Endothelial cell of umbilical vein (primary cell): ENCODE measurements at regions of chr22 and their contacts with region 1.

Region 1: DNA sequence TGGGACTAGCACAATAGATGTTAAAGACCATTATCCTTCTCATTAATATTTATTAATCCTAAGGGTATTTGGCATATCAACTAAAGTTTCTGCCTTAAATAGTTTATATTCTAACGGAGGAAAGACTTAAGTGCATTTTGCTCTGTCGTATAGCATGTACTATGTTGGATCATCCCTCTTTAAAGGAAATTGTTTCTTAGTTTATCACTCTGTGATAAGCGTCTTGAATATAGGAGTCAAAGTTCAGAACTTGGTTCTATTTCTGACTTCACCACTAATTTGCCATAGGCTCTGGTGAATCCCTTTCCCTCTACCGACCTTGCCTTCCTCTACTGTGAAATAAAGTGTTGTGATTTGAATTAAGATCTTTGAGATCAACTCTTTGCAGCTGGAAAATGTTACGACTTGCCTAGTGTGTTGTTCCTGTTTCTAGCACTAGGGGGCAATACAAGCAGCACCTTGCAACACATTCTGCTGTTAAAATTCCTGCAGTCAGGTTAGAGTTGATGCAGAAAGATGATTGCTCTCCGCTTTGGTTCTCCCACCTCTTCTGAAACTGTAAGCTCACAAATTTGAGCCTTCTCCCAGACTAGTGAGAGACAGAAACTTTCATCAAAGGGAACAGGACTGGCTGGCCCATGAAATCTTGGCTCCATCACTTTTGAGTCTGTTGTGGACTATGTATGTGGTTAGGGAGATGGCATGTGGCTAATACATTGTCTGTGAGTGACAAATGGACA is 27.8 kb upstream of the ZNRF3 start:
- DNase-seq: peak; percentile 80
- H3K4me3 ChIP-seq: no peak overlapping the region
- H3K27ac ChIP-seq: no peak overlapping the region
- H3K4me1 ChIP-seq: no peaks in the 10 kb centered on the region
- H3K27me3 ChIP-seq: no peaks in the 10 kb centered on the region
- CTCF ChIP-seq: peak; percentile 74 to 79
- POLR2A ChIP-seq: no peak

Region 2: GRCh38 chr22:28894334-28894733 is 38.8 kb after region 1 on chr22:
- CTCF ChIA-PET with region 1: no interaction called
- POLR2A ChIA-PET with region 1: no interaction called
- dilution Hi-C with region 1: no loop called
- intact Hi-C with region 1: no loop called
- DNase-seq: no peak
- H3K4me3 ChIP-seq: no peak overlapping the region
- H3K27ac ChIP-seq: no peak overlapping the region
- H3K4me1 ChIP-seq: no peaks in the 10 kb centered on the region
- H3K27me3 ChIP-seq: no peaks in the 10 kb centered on the region
- CTCF ChIP-seq: no peak
- POLR2A ChIP-seq: no peak

Region 3: GRCh38 chr22:29062286-29062821 is 206.8 kb after region 1 on chr22:
- CTCF ChIA-PET with region 1: interaction called, 11 read pairs
- POLR2A ChIA-PET with region 1: no interaction called
- dilution Hi-C with region 1: no loop called
- intact Hi-C with region 1: no loop called
- DNase-seq: no peak
- H3K4me3 ChIP-seq: no peak overlapping the region
- H3K27ac ChIP-seq: no peak overlapping the region
- H3K4me1 ChIP-seq: no peaks in the 10 kb centered on the region
- H3K27me3 ChIP-seq: peaks cover 3 to 10% of the 10 kb centered on the region in 2 experiments
- CTCF ChIP-seq: no peak
- POLR2A ChIP-seq: no peak

Region 4: GRCh38 chr22:29154364-29155048 is 299.0 kb after region 1 on chr22:
- CTCF ChIA-PET with region 1: interaction called, 31 read pairs
- POLR2A ChIA-PET with region 1: no interaction called
- dilution Hi-C with region 1: no loop called
- intact Hi-C with region 1: loop called (anchors 1 kb)
- DNase-seq: peak; percentile 74
- H3K4me3 ChIP-seq: no peak overlapping the region
- H3K27ac ChIP-seq: no peak overlapping the region
- H3K4me1 ChIP-seq: no peaks in the 10 kb centered on the region
- H3K27me3 ChIP-seq: peaks cover 0 to 14% of the 10 kb centered on the region in 2 experiments
- CTCF ChIP-seq: peak; percentile 81 to 98
- POLR2A ChIP-seq: no peak